ENCODE measurements at regions of chr6 and their contacts with region 1.

Region 1: DNA sequence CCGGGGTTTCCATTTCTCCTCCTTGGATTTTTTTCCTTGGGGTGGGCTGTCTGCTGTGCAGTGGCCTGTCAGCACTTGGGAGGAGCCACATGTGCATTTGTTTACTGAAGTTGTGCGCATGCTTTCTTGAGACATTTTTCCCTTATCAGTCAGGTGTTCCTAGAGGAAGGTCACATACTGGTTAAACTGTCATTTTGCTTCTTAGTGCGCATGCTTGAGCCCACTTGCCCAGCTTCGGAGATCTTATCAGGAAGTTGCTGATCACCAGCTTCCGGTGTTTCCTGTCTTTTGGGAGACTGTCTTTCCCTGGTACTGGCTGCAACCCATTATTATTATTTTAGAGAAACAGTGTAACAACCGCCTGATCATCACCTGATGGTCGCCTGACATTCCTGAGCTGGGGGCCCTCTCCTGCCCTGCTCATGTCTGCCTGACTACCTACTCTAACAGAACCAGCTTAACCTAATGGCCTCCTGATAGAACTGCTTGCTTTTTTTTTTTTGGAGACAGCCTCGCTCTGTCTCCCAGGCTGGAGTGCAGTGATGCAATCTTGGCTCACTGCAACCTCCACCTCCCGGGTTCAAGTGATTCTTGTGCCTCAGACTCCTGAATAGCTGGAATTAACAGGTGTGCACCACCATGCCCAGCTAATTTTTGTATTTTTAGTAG is 378 bp upstream of the ERVFRD-1 start:
- DNase-seq: no peak
- H3K4me3 ChIP-seq: no peak overlapping the region
- H3K27ac ChIP-seq: no peak overlapping the region
- H3K4me1 ChIP-seq: no peaks in the 10 kb centered on the region
- CTCF ChIP-seq: no peak

Region 2: GRCh38 chr6:10112871-10113549 is 998.9 kb before region 1 on chr6:
- CTCF ChIA-PET with region 1: no interaction called
- POLR2A ChIA-PET with region 1: interaction called, 11 read pairs
- intact Hi-C with region 1: no loop called
- DNase-seq: no peak
- H3K4me3 ChIP-seq: no peak overlapping the region
- H3K27ac ChIP-seq: no peak overlapping the region
- H3K4me1 ChIP-seq: no peaks in the 10 kb centered on the region
- CTCF ChIP-seq: no peak

Region 3: DNA sequence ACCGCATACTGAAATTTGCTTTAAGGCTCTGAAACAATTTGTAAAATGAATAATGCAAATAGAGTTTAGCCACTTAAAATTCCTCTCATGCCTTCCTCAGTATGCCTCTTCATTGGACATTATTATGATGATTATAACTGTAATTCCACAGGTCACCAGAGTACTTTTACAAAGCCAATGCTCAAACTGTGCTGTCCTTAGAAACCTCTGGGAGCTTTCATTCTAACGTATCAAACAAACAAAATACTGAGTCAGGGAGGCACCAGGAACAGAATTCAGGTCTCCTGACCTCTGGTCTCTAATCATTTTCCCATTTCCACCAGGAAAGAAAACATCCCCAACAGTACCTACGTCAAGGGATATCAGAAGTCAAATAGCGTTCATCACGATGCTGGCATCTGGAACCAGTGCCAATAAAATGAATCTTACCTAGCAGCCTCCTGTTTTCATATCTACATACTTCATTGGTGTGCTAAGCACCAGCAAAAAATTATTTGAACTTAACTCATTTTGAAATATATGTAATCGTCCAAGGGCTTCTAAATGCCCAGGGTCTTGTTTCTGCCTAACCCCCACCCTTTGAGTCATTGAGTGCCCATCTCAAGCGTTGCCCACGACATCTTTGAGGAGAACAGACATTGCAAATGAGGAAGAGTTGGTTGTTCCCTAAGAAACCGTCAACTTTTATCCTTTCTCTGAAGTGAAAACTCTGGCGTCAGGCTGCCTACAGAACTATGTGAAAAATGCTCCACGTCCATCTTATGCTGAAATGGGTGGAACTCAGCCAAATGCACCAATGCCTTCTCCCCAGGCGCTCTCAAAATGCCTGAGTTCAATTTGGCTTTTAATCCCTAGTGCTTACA is 82.7 kb after region 1 on chr6:
- CTCF ChIA-PET with region 1: no interaction called
- POLR2A ChIA-PET with region 1: no interaction called
- intact Hi-C with region 1: no loop called
- DNase-seq: no peak
- H3K4me3 ChIP-seq: no peak overlapping the region
- H3K27ac ChIP-seq: no peak overlapping the region
- H3K4me1 ChIP-seq: no peaks in the 10 kb centered on the region
- CTCF ChIP-seq: no peak

Region 4: GRCh38 chr6:11770546-11771466 is 658.9 kb after region 1 on chr6:
- CTCF ChIA-PET with region 1: no interaction called
- POLR2A ChIA-PET with region 1: no interaction called
- intact Hi-C with region 1: no loop called
- DNase-seq: no peak
- H3K4me3 ChIP-seq: no peak overlapping the region
- H3K27ac ChIP-seq: no peak overlapping the region
- H3K4me1 ChIP-seq: no peaks in the 10 kb centered on the region
- CTCF ChIP-seq: no peak